Stomach (tissue), 19 donors: ENCODE measurements at regions of chr11 and their contacts with region 1.

Region 1: DNA sequence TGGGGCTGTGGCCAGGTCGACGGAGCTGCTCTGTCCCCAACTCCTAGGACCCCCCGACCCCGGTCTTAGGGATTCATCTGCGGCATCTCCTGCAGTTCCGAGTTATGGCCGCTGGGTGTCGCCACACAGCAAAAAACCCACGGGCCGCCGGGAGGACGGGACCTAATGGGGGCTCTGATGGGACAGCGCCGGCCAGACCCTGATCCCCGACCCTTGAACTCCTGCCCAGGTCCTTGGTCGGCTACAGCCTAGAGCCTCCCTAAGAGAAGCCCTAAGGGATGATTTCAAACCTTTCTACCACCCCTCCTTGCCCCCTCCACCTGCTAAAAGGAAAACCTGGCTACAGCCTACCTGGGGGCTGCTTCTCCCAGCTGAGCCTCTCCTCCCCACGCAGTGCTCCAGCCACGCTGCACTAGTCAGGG is 30.8 kb upstream of the LRRC10B start:
- DNase-seq: peak; percentile 51 to 75
- H3K4me3 ChIP-seq: no peak overlapping the region
- H3K27ac ChIP-seq: peak overlapping the region in 2 of 5 donors; percentile 27 to 73
- H3K4me1 ChIP-seq: peaks cover 9 to 35% (median 20%) of the 10 kb centered on the region in 4 donors
- H3K27me3 ChIP-seq: peaks cover 0 to 38% (median 19%) of the 10 kb centered on the region in 3 donors
- CTCF ChIP-seq: peak in 6 of 7 experiments; percentile 64 to 96 (median 88)
- EP300 ChIP-seq: no peak
- POLR2A ChIP-seq: no peak

Region 2: DNA sequence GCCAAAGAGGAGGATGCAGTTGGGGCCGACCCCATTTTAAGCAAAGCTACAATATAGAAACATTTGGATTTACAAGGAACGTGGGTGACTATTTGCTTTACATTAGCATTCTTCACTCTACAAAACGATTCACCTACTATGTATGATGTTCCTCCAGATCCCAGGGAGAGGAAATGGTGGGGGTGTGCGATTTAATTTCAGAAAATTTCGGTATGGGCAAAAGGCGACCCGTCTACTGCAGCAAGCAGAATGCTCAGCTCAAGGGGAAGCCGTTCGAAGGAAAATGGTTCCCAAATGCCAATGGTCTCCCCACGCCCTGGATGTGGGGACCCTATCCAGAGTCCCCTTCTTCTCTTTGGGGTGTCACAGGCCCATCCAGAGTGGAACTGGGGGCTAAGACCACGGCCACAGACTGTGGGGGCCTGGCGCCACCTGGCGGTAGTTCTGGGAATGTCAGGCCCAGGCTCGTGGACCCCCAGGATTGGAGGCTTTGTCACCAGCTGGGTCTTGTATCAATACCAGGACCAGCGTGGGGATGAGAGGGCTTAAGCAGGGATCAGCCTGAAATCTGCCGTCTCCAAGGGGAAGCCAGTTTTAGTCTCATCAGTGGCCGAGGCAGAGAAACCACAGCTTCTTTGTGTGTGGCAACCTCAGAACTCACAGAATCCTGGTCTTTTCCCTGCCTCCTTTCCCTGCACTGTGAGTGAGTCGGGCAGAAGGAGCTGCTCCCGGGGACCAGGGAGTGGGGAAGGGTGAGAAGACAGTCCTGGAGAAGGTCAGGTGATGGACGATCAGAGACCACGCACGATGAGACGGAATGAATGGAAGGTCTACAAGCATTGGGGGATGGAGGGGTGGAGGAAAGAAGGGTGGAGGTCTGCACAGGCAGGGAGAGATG is 39.2 kb after region 1 on chr11:
- intact Hi-C with region 1: loop called (anchors 5 kb)
- DNase-seq: peak; percentile 35 to 77
- H3K4me3 ChIP-seq: no peak overlapping the region
- H3K27ac ChIP-seq: peak overlapping the region in 2 of 5 donors; percentile 22 to 81
- H3K4me1 ChIP-seq: peaks cover 6 to 18% (median 12%) of the 10 kb centered on the region in 4 donors
- H3K27me3 ChIP-seq: peaks cover 0 to 54% (median 8%) of the 10 kb centered on the region in 3 donors
- CTCF ChIP-seq: peak in 6 of 7 experiments; percentile 75 to 98 (median 96)
- EP300 ChIP-seq: no peak
- POLR2A ChIP-seq: no peak

Region 3: DNA sequence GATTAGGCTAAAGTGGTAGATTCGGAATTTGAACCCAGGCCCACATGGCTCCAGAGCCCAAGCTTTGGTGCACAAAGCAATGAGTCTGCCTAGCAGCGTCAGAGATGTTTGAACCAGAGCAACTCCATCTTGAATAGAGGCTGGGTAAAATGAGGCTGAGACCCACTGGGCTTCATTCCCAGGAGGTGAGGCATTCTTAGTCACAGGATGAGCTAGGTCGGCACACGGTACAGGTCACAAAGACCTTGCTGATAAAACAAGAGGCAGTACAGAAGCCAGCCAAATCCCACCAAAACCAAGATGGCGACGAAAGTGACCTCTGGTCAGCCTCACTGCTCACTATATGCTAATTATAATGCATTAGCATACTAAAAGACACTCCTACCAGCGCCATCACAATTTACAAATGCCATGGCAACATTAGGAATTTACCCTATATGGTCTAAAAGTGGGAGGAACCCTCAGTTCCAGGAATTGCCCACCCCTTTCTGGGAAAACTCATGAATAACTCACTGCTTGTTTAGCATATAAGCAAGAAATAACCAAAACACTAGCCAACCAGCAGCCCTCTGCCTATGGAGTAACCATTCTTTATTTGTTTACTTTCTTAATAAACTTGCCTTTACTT is 162.2 kb after region 1 on chr11:
- intact Hi-C with region 1: loop called (anchors 5 kb)
- DNase-seq: no peak
- H3K4me3 ChIP-seq: no peak overlapping the region
- H3K27ac ChIP-seq: no peak overlapping the region
- H3K4me1 ChIP-seq: peaks cover 0 to 6% (median 3%) of the 10 kb centered on the region in 4 donors
- H3K27me3 ChIP-seq: peaks cover 0 to 14% (median 0%) of the 10 kb centered on the region in 3 donors
- CTCF ChIP-seq: no peak
- EP300 ChIP-seq: no peak
- POLR2A ChIP-seq: no peak